Naive thymus-derived CD4-positive, alpha-beta T cell (primary cell): ENCODE measurements at regions of chr5 and their contacts with region 1.

Region 1: DNA sequence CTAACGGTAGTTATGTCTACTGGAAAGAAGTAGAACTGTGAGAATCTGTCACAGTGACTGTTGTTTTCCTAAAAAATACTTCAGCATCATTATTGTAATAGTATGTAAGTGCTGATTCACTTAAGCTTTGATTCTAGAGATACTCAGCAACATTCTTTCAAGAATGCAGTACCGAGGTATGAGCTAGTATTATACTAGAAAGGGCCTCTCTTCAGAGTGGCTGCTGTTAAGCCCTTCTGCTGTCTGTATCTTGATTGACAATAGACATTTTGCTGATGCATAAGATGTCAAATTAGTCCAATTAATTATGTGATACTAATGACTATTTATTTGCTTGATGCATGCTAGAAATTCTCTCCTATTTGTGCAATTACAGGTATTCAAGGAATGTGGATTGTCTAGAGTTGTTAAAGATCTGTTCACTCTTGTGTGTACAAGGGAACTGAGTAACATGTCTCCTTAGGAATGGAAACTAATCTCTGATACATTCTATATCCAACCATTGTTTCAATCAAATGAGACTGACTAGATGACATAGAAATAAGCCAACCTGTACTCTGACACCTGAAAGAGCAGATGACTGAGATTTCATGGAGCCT is 92.3 kb upstream of the PTGER4 start:
- DNase-seq: no peak
- ATAC-seq: no peak
- H3K4me3 ChIP-seq: no peak overlapping the region
- H3K4me3 Mint-ChIP-seq: no peak overlapping the region
- H3K27ac ChIP-seq: no peak overlapping the region
- H3K27ac Mint-ChIP-seq: no peak overlapping the region
- H3K4me1 ChIP-seq: no peaks in the 10 kb centered on the region
- H3K4me1 Mint-ChIP-seq: peaks cover 6 to 20% (median 11%) of the 10 kb centered on the region in 7 donors
- H3K27me3 ChIP-seq: no peaks in the 10 kb centered on the region
- H3K27me3 Mint-ChIP-seq: no peaks in the 10 kb centered on the region

Region 2: DNA sequence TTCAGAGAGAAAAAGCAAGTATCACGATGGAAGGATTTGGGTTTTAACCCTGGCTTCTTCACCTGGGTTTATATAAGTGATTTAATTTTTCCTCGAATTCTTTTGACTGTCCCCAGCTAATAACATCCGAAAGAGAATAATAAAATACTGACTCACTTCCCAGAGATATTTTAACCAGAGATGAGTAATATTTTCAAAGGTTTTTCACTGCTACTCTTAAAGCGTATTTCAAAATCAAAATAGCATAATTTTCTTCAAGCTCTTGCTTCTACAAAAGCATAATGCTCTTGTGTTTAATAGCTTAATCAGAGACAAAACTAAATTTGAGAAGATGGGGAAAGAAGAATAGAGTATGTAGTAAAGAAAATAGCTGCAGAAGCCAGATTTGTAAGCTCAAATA is 122.9 kb before region 1 on chr5:
- CTCF ChIA-PET with region 1: no interaction called
- POLR2A ChIA-PET with region 1: no interaction called
- intact Hi-C with region 1: no loop called
- DNase-seq: no peak
- ATAC-seq: no peak
- H3K4me3 ChIP-seq: no peak overlapping the region
- H3K4me3 Mint-ChIP-seq: no peak overlapping the region
- H3K27ac ChIP-seq: no peak overlapping the region
- H3K27ac Mint-ChIP-seq: no peak overlapping the region
- H3K4me1 ChIP-seq: no peaks in the 10 kb centered on the region
- H3K4me1 Mint-ChIP-seq: peaks cover 0 to 4% (median 0%) of the 10 kb centered on the region in 7 donors
- H3K27me3 ChIP-seq: no peaks in the 10 kb centered on the region
- H3K27me3 Mint-ChIP-seq: peaks cover 0 to 2% (median 0%) of the 10 kb centered on the region in 5 donors

Region 3: GRCh38 chr5:40486437-40487275 is 100.7 kb before region 1 on chr5:
- CTCF ChIA-PET with region 1: no interaction called
- POLR2A ChIA-PET with region 1: no interaction called
- intact Hi-C with region 1: no loop called
- DNase-seq: peak in 8 of 9 donors; percentile 31 to 76 (median 56)
- ATAC-seq: peak; percentile 81
- H3K4me3 ChIP-seq: no peak overlapping the region
- H3K4me3 Mint-ChIP-seq: peak overlapping the region in 4 of 10 donors; percentile 2 to 52 (median 48)
- H3K27ac ChIP-seq: no peak overlapping the region
- H3K27ac Mint-ChIP-seq: peak overlapping the region in 8 of 9 donors; percentile 5 to 87 (median 59)
- H3K4me1 ChIP-seq: peaks cover 6 to 12% of the 10 kb centered on the region in 2 donors
- H3K4me1 Mint-ChIP-seq: peaks cover 6 to 69% (median 30%) of the 10 kb centered on the region in 7 donors
- H3K27me3 ChIP-seq: no peaks in the 10 kb centered on the region
- H3K27me3 Mint-ChIP-seq: no peaks in the 10 kb centered on the region

Region 4: DNA sequence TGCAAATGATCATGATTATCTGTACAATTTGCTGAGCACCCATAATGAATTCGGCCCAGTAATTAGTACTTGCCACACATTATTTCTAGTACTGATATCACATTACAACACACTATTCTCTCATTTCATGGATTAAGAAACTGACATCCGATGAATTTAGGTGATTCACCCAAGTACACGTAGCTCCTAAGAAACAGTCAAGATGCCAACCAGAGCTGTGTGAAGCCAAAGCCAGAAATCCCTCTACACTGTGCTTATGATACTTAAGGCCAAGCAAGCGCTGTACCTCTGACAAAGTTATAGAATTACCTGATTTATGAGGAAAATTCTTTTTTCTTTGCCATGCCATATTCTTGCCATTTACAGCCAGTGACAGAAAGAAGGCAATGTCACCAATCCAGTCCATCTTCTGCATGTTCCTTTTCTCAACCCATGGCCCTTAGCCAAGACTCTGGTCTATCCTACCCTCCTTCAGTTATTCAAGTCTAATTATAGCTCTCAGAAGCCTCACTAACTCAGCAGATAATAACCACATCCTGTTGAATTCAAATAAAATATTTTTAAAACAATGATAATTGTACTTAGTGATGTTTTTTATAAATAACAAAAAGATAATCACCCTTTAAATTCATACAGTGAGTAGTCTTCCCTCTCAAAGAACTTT is 18.0 kb after region 1 on chr5:
- CTCF ChIA-PET with region 1: no interaction called
- POLR2A ChIA-PET with region 1: no interaction called
- intact Hi-C with region 1: loop called in 1 of 2 experiments (anchors 2 kb)
- DNase-seq: peak in 5 of 9 donors; percentile 15 to 46 (median 33)
- ATAC-seq: peak; percentile 63
- H3K4me3 ChIP-seq: no peak overlapping the region
- H3K4me3 Mint-ChIP-seq: peak overlapping the region in 6 of 10 donors; percentile 47 to 80 (median 68)
- H3K27ac ChIP-seq: no peak overlapping the region
- H3K27ac Mint-ChIP-seq: peak overlapping the region in 5 of 9 donors; percentile 11 to 57 (median 32)
- H3K4me1 ChIP-seq: peaks cover 15 to 17% of the 10 kb centered on the region in 2 donors
- H3K4me1 Mint-ChIP-seq: peaks cover 23 to 39% (median 32%) of the 10 kb centered on the region in 7 donors
- H3K27me3 ChIP-seq: no peaks in the 10 kb centered on the region
- H3K27me3 Mint-ChIP-seq: no peaks in the 10 kb centered on the region